GM13976 (cell line): ENCODE measurements at regions of chr4 and their contacts with region 1.

Region 1: DNA sequence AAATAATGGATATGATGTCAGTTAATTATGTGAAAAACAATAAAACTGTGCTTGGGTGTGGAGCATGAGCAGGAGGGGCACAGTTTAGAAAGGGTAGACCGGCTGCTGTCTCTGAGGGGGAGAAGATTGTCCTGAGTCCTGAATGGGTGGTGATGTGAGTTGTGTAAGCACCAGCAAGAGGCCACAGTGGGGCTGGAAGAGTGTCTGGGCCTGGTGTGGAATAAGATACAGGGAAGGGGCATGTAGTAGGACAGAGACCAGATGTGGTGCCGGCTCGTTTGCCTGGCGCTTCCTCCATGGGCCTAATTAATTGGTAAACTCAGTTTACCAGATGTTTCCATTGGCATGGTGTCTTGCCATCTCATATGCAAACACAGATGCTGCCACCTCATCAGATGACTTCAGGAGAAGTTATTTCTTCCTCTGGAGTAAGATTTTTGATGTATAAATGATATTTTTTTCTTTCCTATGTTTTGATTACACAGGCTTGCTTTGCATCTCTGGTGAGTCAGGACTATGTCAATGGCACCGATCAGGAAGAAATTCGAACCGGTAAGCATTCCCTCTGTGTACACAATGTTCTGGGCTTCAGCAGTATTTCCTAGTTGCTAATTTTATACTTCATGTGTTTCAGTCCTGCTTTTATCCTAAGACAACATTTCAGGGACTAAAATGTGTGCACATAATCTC is 5.1 kb downstream of the MED28 start:
- DNase-seq: no peak
- CTCF ChIP-seq: no peak

Region 2: DNA sequence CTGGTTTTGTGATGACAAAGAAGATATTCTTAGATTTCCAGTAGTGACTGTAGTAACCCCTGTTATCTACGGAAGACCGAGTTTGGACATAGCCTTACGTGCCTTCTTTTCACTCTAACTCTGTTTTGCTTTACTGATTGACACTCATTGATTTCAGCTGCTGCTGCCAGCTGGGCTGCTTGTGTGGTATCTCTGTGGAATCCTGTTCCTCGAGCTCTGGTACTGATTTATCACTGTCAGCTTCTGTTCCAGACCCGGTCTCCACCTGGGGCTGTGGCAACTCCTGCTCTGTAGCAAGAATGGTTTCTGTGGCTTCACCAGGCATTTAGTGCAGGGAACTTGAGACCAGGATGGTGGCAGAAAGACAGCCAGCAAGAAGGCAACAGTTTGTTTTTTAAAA is 67.1 kb before region 1 on chr4:
- in situ Hi-C with region 1: loop called (anchors 10 kb)
- DNase-seq: no peak
- CTCF ChIP-seq: no peak